Mammary epithelial cell (primary cell): ENCODE measurements at regions of chr3 and their contacts with region 1.

Region 1: DNA sequence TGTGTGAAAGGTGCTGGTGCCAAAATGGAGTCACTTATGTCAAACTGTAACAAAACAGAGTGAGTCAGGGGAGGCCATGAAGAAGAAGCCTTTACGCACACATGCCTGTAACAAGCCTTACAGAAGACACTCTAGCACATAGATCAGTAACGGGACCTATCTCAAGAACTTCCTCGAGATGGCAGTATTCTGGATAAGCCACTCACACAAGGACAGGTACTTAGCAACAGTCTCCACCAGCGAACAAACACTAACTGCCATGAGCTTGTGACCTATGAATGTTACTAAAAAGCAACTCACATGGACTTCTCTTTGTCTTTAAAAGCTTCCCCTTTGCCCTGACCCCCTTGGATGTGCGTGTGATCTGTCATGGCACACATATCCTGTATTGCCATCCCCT is 235.1 kb downstream of the CD47 start:
- DNase-seq: peak; percentile 36
- H3K4me3 ChIP-seq: no peak overlapping the region
- H3K27ac ChIP-seq: no peak overlapping the region
- H3K4me1 ChIP-seq: no peaks in the 10 kb centered on the region
- H3K27me3 ChIP-seq: no peaks in the 10 kb centered on the region
- CTCF ChIP-seq: no peak

Region 2: GRCh38 chr3:107794664-107795443 is 60.9 kb before region 1 on chr3:
- CTCF ChIA-PET with region 1: no interaction called
- dilution Hi-C with region 1: loop called (anchors 5 kb)
- in situ Hi-C with region 1: no loop called
- intact Hi-C with region 1: no loop called
- DNase-seq: no peak
- H3K4me3 ChIP-seq: no peak overlapping the region
- H3K27ac ChIP-seq: no peak overlapping the region
- H3K4me1 ChIP-seq: peaks cover 14% of the 10 kb centered on the region
- H3K27me3 ChIP-seq: no peaks in the 10 kb centered on the region
- CTCF ChIP-seq: peak in 1 of 2 donors; percentile 28